ENCODE measurements at regions of chr17 and their contacts with region 1.

Region 1: DNA sequence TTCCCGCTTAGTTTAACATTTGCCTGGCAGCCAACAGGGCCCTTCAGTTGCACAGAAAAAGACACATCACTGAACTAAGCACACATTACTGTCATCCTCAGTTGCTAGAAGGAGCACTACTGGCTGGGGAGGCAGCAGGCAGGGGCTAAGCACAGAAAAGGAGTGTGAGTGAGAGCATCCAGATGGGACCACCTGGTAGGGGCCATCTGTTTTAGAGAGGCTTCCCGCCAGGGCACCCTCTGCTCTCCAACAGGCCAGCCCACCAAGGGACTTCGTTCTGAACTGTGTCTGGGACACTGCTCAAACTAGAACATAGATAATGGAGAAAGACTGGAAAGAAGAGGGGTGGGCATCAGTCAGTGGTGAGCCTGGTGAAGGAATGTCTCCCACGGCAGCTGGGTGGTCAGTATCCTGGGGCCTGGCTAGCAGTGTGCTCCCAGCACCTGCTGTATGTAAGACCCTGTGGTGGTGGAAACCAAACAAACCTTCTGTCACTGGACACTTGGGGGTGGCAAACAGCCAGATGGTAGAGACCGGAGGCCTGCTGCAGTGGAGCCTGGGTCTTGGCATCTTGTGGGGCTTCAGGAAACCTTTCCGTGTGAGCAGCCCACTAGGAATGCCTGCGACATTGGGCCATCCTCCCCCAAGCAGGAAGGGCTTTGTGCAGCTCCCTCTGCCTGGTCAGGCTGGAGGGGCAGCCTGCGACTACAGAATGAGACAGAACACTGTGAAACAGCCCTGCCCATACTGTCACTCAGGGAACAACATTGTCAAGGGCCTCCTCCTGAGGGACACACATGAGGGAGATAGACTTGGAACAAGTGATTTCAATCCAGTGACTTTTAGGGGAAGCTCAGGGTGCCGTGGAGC is 12.8 kb upstream of the RANGRF start:
- DNase-seq: no peak
- H3K4me3 ChIP-seq: no peak overlapping the region
- H3K27ac ChIP-seq: no peak overlapping the region
- H3K4me1 ChIP-seq: no peaks in the 10 kb centered on the region; a peak in 1 of 7 replicates
- H3K27me3 ChIP-seq: no peaks in the 10 kb centered on the region
- CTCF ChIP-seq: no peak
- EP300 ChIP-seq: no peak
- POLR2A ChIP-seq: no peak
- RAD21 ChIP-seq: no peak

Region 2: DNA sequence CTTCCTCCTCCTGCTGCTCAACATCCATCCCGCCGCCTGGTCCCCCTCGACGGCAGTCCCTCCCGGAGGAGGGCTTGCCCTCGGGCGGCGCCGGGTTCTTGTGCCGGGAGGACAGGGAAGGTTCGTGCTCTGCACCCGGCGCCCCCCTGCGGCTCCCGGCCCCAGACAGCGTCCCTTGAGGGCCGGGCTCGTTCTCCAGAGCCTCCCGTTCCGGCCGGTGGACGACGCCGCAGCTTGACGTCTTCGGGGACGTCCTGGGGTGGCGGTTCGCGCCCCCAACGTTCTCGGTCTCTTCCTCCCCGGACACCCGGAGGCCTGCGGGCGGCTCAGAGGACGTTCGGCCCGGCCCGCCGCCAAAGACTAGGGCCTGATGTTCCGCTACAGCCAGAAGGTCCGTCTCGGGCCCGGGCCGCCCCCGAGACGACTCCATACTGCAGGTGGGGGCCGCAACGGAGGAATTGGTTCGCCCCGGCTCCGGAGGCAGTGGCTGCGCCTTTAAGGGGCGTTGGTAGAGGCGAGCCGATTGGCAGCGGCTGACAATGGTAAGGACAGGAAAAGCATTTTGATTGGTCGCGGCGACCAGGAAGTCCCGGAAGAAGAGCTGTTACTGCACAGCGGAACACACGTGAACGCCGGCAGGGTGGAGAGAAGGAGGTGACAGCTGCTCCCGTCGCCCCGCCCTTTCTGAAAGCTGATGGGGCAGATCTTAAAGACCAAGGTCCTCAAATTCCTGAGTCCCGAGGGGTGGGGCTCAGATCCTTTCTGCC is 85.8 kb before region 1 on chr17 and contains the start of gene BORCS6:
- CTCF ChIA-PET with region 1: no interaction called
- POLR2A ChIA-PET with region 1: no interaction called
- DNase-seq: peak; percentile 87
- H3K4me3 ChIP-seq: peak within 1 kb of the TSS; percentile 59 to 89 (median 78)
- H3K27ac ChIP-seq: no peak within 1 kb of the TSS
- H3K4me1 ChIP-seq: peaks cover 4 to 21% (median 10%) of the 10 kb centered on the region in 4 experiments; a peak in 6 of 7 replicates
- H3K27me3 ChIP-seq: peaks cover 2 to 17% (median 11%) of the 10 kb centered on the region in 4 experiments
- CTCF ChIP-seq: no peak
- EP300 ChIP-seq: no peak
- POLR2A ChIP-seq: no peak
- RAD21 ChIP-seq: no peak
- total RNA-seq, gene BORCS6: 3.6 and 4.6 TPM in 2 replicates

Region 3: DNA sequence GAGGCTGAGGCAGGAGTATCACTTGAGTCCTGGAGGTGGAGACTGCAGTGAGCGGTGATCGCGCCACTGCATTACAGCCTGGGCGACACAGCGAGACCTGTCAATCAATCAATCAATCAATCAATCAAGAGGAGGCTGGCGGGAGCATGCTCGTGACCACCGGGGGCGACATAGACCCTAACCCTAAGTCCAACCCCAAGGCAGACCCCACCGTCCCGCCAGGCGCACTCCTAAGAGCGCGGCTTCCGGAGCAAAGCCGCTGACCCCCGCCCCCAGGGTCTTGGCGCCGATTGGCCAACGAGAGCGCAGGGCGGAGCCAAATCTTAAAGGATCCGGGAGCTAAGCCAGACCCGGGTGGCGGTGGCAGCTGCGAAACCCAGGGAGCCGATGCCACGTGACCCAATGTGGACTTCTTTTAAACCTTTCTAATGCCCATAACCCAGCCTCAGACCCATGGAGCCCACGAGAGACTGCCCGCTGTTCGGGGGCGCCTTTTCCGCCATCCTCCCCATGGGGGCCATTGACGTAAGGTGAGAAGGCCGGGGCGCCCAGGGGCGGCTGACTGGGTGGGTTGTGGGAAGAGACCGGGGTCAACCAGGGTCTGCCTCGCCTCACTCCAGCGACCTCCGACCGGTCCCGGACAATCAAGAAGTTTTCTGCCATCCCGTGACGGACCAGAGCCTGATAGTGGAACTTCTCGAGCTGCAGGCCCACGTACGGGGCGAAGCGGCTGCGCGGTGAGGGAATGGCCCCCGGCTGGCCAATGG is 12.9 kb after region 1 on chr17 and contains the start of gene RANGRF:
- CTCF ChIA-PET with region 1: interaction called, 3 read pairs
- POLR2A ChIA-PET with region 1: interaction called, 115 read pairs
- DNase-seq: peak; percentile 60 to 94
- H3K4me3 ChIP-seq: peak within 1 kb of the TSS; percentile 65 to 87 (median 72)
- H3K27ac ChIP-seq: no peak within 1 kb of the TSS; the same call in 1 of the 2 replicates
- H3K4me1 ChIP-seq: peaks cover 0 to 8% (median 5%) of the 10 kb centered on the region in 4 experiments; a peak in 4 of 7 replicates
- H3K27me3 ChIP-seq: no peaks in the 10 kb centered on the region
- CTCF ChIP-seq: peak in 2 of 3 experiments; percentile 8 to 16; a peak in 2 of 4 replicates
- EP300 ChIP-seq: no peak
- POLR2A ChIP-seq: peak; percentile 45 to 46
- RAD21 ChIP-seq: no peak
- total RNA-seq, gene RANGRF: 36.9 and 39.4 TPM in 2 replicates

Region 4: DNA sequence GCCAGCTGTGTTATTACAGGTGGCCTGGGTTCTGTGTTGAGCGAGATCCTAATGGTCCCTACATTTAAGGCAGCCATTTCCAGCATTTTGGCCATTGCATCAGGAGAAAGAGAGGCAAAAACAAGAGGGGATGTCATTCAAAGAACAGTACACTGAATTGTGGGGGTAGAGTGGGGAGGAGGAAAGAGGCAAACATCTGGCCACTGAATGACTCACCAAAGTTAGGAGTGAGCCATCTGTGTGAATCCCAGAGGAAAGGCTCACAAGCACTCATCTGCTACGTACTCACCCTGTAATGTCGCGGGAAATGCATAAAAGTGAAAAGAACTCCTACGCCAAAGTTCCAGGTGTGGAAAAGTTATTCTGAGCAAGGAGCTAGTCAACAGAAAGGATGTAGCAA is 84.1 kb after region 1 on chr17:
- CTCF ChIA-PET with region 1: no interaction called
- POLR2A ChIA-PET with region 1: no interaction called
- DNase-seq: no peak
- H3K4me3 ChIP-seq: no peak overlapping the region
- H3K27ac ChIP-seq: no peak overlapping the region
- H3K4me1 ChIP-seq: peaks cover 0 to 5% (median 1%) of the 10 kb centered on the region in 4 experiments; a peak in 1 of 7 replicates
- H3K27me3 ChIP-seq: no peaks in the 10 kb centered on the region
- CTCF ChIP-seq: no peak
- EP300 ChIP-seq: no peak
- POLR2A ChIP-seq: no peak
- RAD21 ChIP-seq: no peak